Dendritic cell treated with granulocyte-macrophage colony-stimulating factor and Interleukin-4, amounts not matched to agents 40 ng/mL and 50 ng/mL, for 4 days (primary cell): ENCODE measurements at regions of chr21 and their contacts with region 1.

Region 1: DNA sequence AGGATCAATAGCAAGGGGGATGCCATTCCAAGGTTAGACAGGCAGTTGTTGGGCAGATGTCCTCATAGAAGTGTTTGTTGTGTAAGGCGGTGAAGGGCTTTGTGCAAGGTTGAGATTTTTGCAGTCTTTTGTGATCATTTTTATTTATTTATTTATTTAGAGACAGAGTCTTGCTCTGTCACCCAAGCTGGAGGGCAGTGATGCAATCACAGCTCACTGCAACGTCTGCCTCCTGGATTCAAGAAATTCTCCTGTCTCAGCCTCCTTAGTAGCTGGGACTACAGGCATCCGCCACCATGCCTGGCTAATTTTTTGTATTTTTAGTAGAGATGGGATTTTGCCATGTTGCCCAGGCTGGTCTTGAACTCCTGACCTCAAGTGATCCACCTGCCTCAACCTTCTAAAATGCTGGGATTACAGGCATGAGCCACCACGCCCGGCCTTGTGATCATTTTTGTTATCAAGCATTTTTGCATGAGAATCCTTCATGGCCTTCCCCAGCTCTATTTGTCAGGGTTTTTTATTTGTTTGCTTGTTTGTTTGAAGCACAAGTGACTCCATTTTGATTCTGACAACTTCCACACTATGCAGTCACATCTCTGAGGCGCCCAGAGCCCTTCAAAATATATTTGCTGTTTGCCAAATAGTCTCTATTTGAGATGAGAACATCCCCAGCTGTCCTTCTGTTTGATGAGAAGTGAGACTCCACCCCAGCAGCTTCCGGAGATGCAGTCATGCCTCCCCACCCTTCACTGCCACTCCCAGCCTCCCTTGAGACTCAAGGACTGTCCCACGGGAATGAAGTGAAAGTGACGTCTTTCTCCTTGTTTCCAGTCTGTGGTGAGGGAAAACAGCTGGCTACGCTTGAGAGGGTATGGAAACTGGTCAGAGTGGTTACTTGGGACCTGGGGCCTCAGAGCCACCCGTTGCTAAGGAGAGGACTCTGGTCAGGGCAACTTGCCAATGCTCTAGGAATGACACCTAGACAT is 38.0 kb downstream of the TMEM50B start:
- H3K4me3 Mint-ChIP-seq: peak overlapping the region; percentile 26
- H3K27ac Mint-ChIP-seq: peak overlapping the region; percentile 66
- H3K4me1 Mint-ChIP-seq: peaks cover 38% of the 10 kb centered on the region
- H3K27me3 Mint-ChIP-seq: no peaks in the 10 kb centered on the region

Region 2: DNA sequence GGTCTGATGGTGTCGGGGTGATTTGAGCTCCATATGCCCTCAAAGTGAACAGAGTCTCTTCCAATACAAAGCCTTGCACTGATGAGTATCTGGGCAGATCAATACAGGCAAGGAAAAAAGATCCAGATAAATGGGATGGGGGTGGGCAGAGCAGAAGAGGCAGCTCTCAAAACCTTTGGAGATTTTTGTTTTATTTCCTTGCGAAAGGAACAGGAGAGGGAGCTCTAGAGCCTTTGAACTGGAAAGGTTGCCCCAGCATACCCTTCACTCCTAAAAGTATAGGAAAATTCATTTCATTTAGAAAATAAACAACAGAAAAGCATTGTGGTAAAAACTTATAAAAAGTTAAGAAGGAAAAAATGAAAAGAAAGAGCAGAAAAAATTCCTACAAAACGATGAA is 447.5 kb before region 1 on chr21:
- intact Hi-C with region 1: loop called (anchors 10 kb)
- H3K4me3 Mint-ChIP-seq: no peak overlapping the region
- H3K27ac Mint-ChIP-seq: no peak overlapping the region
- H3K4me1 Mint-ChIP-seq: no peaks in the 10 kb centered on the region
- H3K27me3 Mint-ChIP-seq: peaks cover 36% of the 10 kb centered on the region

Region 3: GRCh38 chr21:33244082-33244778 is 197.6 kb before region 1 on chr21:
- intact Hi-C with region 1: loop called (anchors 10 kb)
- H3K4me3 Mint-ChIP-seq: no peak overlapping the region
- H3K27ac Mint-ChIP-seq: peak overlapping the region; percentile 75
- H3K4me1 Mint-ChIP-seq: peaks cover 44% of the 10 kb centered on the region
- H3K27me3 Mint-ChIP-seq: no peaks in the 10 kb centered on the region

Region 4: DNA sequence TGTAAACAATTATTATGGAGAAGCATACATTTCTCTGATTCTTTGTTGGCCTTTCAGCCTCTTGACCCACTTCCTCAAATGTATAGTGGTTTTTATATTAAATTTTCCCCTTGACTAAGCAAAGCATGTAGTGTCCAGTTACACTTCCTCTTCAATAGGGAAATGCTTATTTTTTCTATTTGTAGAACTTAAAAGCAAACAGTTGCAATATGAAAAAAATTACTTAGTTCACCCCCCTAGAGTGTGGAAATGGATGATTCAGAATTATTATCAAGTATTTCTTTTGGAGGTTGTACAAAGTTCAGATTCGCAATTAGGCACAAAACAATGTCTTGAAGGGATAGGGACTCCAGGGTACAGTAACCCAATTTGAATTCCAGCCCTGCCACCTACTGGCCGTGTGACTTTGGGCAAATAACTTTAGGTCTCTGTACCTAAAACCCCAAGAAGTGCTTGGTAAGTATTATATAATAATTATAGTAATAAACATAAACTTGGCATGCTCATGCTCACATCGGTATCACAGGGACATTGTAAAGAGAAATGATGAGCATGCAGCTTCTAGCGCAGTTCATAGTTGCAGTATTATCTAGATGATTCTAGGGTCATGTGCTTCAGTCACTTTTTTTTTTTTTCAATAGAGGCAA is 67.2 kb before region 1 on chr21:
- intact Hi-C with region 1: no loop called
- H3K4me3 Mint-ChIP-seq: no peak overlapping the region
- H3K27ac Mint-ChIP-seq: peak overlapping the region; percentile 87
- H3K4me1 Mint-ChIP-seq: peaks cover 60% of the 10 kb centered on the region
- H3K27me3 Mint-ChIP-seq: no peaks in the 10 kb centered on the region

Region 5: DNA sequence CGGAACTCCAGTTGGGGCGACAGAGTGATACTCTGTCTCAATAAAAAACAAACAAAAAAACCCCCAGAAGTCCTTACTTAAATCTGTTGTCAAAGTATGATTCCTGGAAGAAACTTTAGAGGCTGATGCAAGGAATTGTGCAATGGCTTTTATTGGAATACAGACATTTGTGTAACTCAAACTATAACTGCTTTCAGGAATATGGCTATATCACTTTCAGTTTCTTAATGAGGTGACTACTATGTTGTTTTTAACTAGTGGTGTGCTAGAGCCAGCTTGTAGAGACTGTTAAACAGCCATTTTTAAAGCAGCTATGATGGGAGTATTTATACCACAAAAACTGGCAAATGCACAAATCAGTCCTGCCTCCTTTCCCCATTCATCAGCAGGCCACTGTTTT is 72.4 kb after region 1 on chr21:
- intact Hi-C with region 1: no loop called
- H3K4me3 Mint-ChIP-seq: no peak overlapping the region
- H3K27ac Mint-ChIP-seq: no peak overlapping the region
- H3K4me1 Mint-ChIP-seq: no peaks in the 10 kb centered on the region
- H3K27me3 Mint-ChIP-seq: no peaks in the 10 kb centered on the region